SK-N-SH (cell line): ENCODE measurements at regions of chr5 and their contacts with region 1.

Region 1: GRCh38 chr5:87400305-87400899 is 12.3 kb downstream of the CCNH start:
- DNase-seq: peak; percentile 35
- H3K4me3 ChIP-seq: no peak overlapping the region; a peak in 1 of 4 replicates
- H3K27ac ChIP-seq: peak overlapping the region in 1 of 2 experiments; percentile 45; a peak in 2 of 4 replicates
- H3K4me1 ChIP-seq: peaks cover 0 to 9% of the 10 kb centered on the region in 2 experiments; a peak in 2 of 4 replicates
- H3K27me3 ChIP-seq: no peaks in the 10 kb centered on the region
- CTCF ChIP-seq: peak; percentile 77
- EP300 ChIP-seq: no peak
- RAD21 ChIP-seq: peak; percentile 74

Region 2: DNA sequence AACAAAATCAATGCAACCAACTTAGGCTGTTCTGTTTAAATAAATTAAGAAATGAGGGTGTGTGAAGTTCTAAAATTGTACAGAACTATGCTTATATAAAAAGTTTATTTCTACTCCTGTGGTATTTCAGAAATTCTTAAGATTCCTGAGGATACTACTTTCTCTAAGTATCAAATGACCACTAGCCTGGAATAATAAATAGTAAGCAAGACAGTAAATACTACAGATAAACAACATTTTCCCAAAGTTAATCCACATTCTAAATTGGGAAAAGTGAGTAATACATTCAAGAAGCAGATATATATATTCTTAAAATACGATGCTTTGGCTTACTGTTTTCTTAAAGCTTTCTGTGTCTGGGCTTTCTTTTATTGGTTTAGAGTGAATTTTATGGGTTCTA is 17.2 kb before region 1 on chr5:
- CTCF ChIA-PET with region 1: interaction called, 17 read pairs
- POLR2A ChIA-PET with region 1: no interaction called
- DNase-seq: no peak
- H3K4me3 ChIP-seq: no peak overlapping the region
- H3K27ac ChIP-seq: peak overlapping the region in 1 of 2 experiments; percentile 15; a peak in 1 of 4 replicates
- H3K4me1 ChIP-seq: peaks cover 0 to 10% of the 10 kb centered on the region in 2 experiments; a peak in 2 of 4 replicates
- H3K27me3 ChIP-seq: no peaks in the 10 kb centered on the region
- CTCF ChIP-seq: no peak
- EP300 ChIP-seq: no peak
- RAD21 ChIP-seq: no peak

Region 3: GRCh38 chr5:87412630-87413342 is 12.4 kb after region 1 on chr5 and contains the start of gene CCNH:
- CTCF ChIA-PET with region 1: interaction called, 39 read pairs
- POLR2A ChIA-PET with region 1: no interaction called
- DNase-seq: peak; percentile 86
- H3K4me3 ChIP-seq: peak within 1 kb of the TSS; percentile 74 to 99
- H3K27ac ChIP-seq: peak within 1 kb of the TSS; percentile 88 to 94
- H3K4me1 ChIP-seq: peaks cover 10 to 11% of the 10 kb centered on the region in 2 experiments
- H3K27me3 ChIP-seq: no peaks in the 10 kb centered on the region
- CTCF ChIP-seq: no peak
- EP300 ChIP-seq: no peak
- RAD21 ChIP-seq: no peak
- polyA plus RNA-seq, gene CCNH: 29.1 and 41.1 TPM in 2 replicates